Sigmoid colon (tissue), 7 donors: ENCODE measurements at regions of chr15 and their contacts with region 1.

Region 1: GRCh38 chr15:45378149-45378912 is at the start of gene GATM:
- DNase-seq: peak; percentile 94
- H3K4me3 ChIP-seq: peak within 1 kb of the TSS; percentile 53 to 65 (median 58)
- H3K27ac ChIP-seq: peak within 1 kb of the TSS; percentile 82 to 93 (median 90)
- H3K4me1 ChIP-seq: peaks cover 0 to 55% (median 33%) of the 10 kb centered on the region in 4 donors
- H3K27me3 ChIP-seq: no peaks in the 10 kb centered on the region
- CTCF ChIP-seq: peak; percentile 9 to 59 (median 39)
- EP300 ChIP-seq: peak in 1 of 4 donors; percentile 21
- POLR2A ChIP-seq: peak; percentile 32 to 57
- total RNA-seq, gene GATM: 38.4 to 51.4 (median 42.0) TPM

Region 2: GRCh38 chr15:44536962-44537734 is 841.2 kb before region 1 on chr15 and contains the start of gene EIF3J:
- intact Hi-C with region 1: loop called (anchors 10 kb)
- DNase-seq: peak; percentile 98
- H3K4me3 ChIP-seq: peak within 1 kb of the TSS; percentile 80 to 100 (median 90)
- H3K27ac ChIP-seq: peak within 1 kb of the TSS; percentile 95 to 99 (median 98)
- H3K4me1 ChIP-seq: peaks cover 0 to 53% (median 47%) of the 10 kb centered on the region in 4 donors
- H3K27me3 ChIP-seq: no peaks in the 10 kb centered on the region
- CTCF ChIP-seq: no peak
- EP300 ChIP-seq: no peak
- POLR2A ChIP-seq: peak; percentile 26 to 57
- total RNA-seq, gene EIF3J: 50.4 to 92.0 (median 56.7) TPM

Region 3: GRCh38 chr15:44711356-44712107 is 666.8 kb before region 1 on chr15 and contains the start of gene B2M:
- intact Hi-C with region 1: loop called (anchors 5 kb)
- DNase-seq: peak; percentile 98
- H3K4me3 ChIP-seq: peak within 1 kb of the TSS; percentile 72 to 91 (median 84)
- H3K27ac ChIP-seq: peak within 1 kb of the TSS; percentile 96 to 99 (median 98)
- H3K4me1 ChIP-seq: peaks cover 0 to 42% (median 24%) of the 10 kb centered on the region in 4 donors
- H3K27me3 ChIP-seq: no peaks in the 10 kb centered on the region
- CTCF ChIP-seq: no peak
- EP300 ChIP-seq: no peak
- POLR2A ChIP-seq: peak; percentile 100
- total RNA-seq, gene B2M: 1,906 to 2,799 (median 2,534) TPM

Region 4: GRCh38 chr15:45166834-45167630 is 211.3 kb before region 1 on chr15:
- intact Hi-C with region 1: loop called (anchors 2 kb)
- DNase-seq: peak; percentile 95
- H3K4me3 ChIP-seq: peak overlapping the region; percentile 46 to 64 (median 56)
- H3K27ac ChIP-seq: peak overlapping the region; percentile 90 to 99 (median 96)
- H3K4me1 ChIP-seq: peaks cover 0 to 33% (median 21%) of the 10 kb centered on the region in 4 donors
- H3K27me3 ChIP-seq: no peaks in the 10 kb centered on the region
- CTCF ChIP-seq: peak; percentile 42 to 77 (median 70)
- EP300 ChIP-seq: no peak
- POLR2A ChIP-seq: peak in 1 of 2 donors; percentile 45

Region 5: DNA sequence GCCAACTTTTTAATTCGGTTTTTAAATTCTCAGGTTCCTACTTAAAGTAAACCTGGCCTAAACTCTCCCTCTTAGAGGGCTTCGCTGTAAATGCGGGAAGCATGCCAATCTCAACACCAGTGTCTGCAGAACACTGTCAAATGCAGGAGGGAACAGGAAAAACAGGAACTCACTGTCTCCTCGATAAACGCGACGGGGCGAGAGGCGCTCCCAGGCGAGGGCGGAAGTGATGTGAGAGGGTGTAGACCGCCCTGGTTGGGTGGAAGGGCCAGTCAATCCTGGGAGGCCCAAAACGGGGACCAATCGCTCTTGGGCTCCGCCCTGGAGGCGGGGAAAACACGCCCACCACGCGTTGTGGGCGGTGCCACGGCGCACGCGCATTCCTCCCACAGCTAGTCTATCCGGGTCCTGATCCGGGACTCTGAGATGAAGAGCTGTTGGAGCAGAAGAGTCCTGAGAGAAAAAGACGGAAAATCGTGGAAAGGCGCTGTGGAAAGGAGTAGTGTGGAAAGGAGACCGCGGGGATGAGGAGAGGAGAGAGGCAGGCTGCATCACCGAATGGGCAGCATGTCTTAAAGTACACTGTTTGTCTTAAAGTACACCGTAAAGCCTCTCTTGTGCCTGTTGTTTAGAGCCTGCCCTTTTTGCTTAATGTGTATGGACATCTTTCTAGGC is 99.2 kb before region 1 on chr15:
- intact Hi-C with region 1: loop called (anchors 2 kb)
- DNase-seq: peak; percentile 99
- H3K4me3 ChIP-seq: peak overlapping the region; percentile 50 to 59 (median 54)
- H3K27ac ChIP-seq: peak overlapping the region; percentile 80 to 90 (median 84)
- H3K4me1 ChIP-seq: peaks cover 0 to 16% (median 10%) of the 10 kb centered on the region in 4 donors
- H3K27me3 ChIP-seq: no peaks in the 10 kb centered on the region
- CTCF ChIP-seq: no peak
- EP300 ChIP-seq: no peak
- POLR2A ChIP-seq: peak; percentile 85 to 87

Region 6: GRCh38 chr15:45402162-45402954 is 24.0 kb after region 1 on chr15:
- intact Hi-C with region 1: loop called (anchors 1 kb)
- DNase-seq: peak; percentile 99
- H3K4me3 ChIP-seq: peak overlapping the region; percentile 70 to 96 (median 88)
- H3K27ac ChIP-seq: peak overlapping the region; percentile 90 to 96 (median 92)
- H3K4me1 ChIP-seq: peaks cover 0 to 37% (median 23%) of the 10 kb centered on the region in 4 donors
- H3K27me3 ChIP-seq: no peaks in the 10 kb centered on the region
- CTCF ChIP-seq: peak in 1 of 4 experiments; percentile 18
- EP300 ChIP-seq: no peak
- POLR2A ChIP-seq: peak; percentile 73 to 74

Region 7: DNA sequence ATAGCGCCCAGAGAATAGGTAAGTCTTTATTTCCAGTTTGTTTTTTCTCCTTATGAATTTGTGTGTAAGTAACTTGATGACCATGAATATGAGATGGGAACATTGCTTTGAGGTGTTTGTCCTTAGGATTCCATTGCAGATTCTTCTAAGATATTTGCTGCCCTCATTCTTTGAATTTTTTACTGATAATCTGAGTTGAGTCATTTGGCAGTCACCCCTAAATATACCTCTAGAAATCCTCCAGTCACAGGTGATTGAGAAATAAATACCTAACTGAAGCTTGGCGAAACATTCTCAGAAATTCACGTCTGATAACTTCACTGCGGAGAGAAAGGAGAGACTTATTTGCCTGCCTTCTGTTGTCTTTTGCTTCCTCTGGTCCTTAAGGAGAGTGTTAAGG is 602.0 kb after region 1 on chr15:
- intact Hi-C with region 1: no loop called
- DNase-seq: no peak
- H3K4me3 ChIP-seq: no peak overlapping the region
- H3K27ac ChIP-seq: no peak overlapping the region
- H3K4me1 ChIP-seq: no peaks in the 10 kb centered on the region
- H3K27me3 ChIP-seq: no peaks in the 10 kb centered on the region
- CTCF ChIP-seq: no peak
- EP300 ChIP-seq: no peak
- POLR2A ChIP-seq: no peak